B cell (primary cell): ENCODE measurements at regions of chr19 and their contacts with region 1.

Region 1: GRCh38 chr19:48993175-48994034 is at the starts of genes GYS1 and RUVBL2:
- DNase-seq: peak; percentile 100
- ATAC-seq: peak; percentile 91
- H3K4me3 ChIP-seq: peak within 1 kb of the TSS; percentile 61 to 94 (median 79)
- H3K4me3 Mint-ChIP-seq: peak within 1 kb of the TSS; percentile 94
- H3K27ac ChIP-seq: peak within 1 kb of the TSS; percentile 77 to 89
- H3K27ac Mint-ChIP-seq: peak within 1 kb of the TSS; percentile 92
- H3K4me1 ChIP-seq: peaks cover 15 to 27% of the 10 kb centered on the region in 2 donors
- H3K4me1 Mint-ChIP-seq: peaks cover 34% of the 10 kb centered on the region
- H3K27me3 ChIP-seq: no peaks in the 10 kb centered on the region
- H3K27me3 Mint-ChIP-seq: no peaks in the 10 kb centered on the region
- CTCF ChIP-seq: peak; percentile 99
- total RNA-seq, gene GYS1: 62.7 and 63.0 TPM in 2 replicates
- total RNA-seq, gene RUVBL2: 36.1 and 44.8 TPM in 2 replicates

Region 2: DNA sequence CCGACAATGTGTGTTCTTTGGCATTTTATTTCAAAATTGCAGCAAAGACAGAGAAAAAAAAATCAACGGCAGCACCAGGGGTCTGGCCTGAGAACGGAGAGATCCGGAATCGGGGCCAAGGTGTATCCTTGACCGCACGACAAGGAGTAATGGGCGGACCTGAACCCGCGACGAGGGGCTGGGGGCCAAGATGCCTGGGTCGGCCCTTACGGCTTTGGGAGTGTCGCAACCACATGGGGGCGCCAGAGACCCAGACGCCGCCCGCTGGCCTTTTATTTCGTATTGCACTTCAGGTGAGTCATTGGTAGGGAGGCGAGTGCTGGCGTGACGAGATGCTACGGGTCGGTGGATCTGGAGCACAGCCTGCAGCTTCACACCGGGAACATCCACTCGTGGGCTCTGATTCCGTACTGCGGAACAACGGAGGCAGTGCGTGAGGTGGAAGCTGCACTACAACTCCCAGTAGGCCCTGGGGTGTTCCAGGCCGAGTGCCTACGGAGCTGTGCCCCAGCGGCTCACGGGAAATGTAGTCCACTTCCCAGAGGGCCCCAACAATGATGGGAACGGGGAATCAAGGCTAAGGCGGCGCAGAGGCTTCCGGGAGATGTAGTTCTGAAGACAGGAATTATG is 198.2 kb before region 1 on chr19:
- CTCF ChIA-PET with region 1: interaction called, 9 read pairs
- POLR2A ChIA-PET with region 1: no interaction called
- intact Hi-C with region 1: loop called (anchors 1 kb)
- DNase-seq: peak; percentile 93
- ATAC-seq: peak; percentile 98
- H3K4me3 ChIP-seq: peak overlapping the region; percentile 42 to 68 (median 60)
- H3K4me3 Mint-ChIP-seq: peak overlapping the region; percentile 98
- H3K27ac ChIP-seq: peak overlapping the region; percentile 30 to 62
- H3K27ac Mint-ChIP-seq: peak overlapping the region; percentile 93
- H3K4me1 ChIP-seq: peaks cover 3 to 10% of the 10 kb centered on the region in 2 donors
- H3K4me1 Mint-ChIP-seq: peaks cover 11% of the 10 kb centered on the region
- H3K27me3 ChIP-seq: no peaks in the 10 kb centered on the region
- H3K27me3 Mint-ChIP-seq: no peaks in the 10 kb centered on the region
- CTCF ChIP-seq: peak; percentile 96

Region 3: GRCh38 chr19:48881741-48882657 is 111.4 kb before region 1 on chr19:
- CTCF ChIA-PET with region 1: no interaction called
- POLR2A ChIA-PET with region 1: no interaction called
- intact Hi-C with region 1: no loop called
- DNase-seq: peak; percentile 61
- ATAC-seq: peak; percentile 54
- H3K4me3 ChIP-seq: no peak overlapping the region
- H3K4me3 Mint-ChIP-seq: no peak overlapping the region
- H3K27ac ChIP-seq: no peak overlapping the region
- H3K27ac Mint-ChIP-seq: no peak overlapping the region
- H3K4me1 ChIP-seq: peaks cover 0 to 18% of the 10 kb centered on the region in 2 donors
- H3K4me1 Mint-ChIP-seq: peaks cover 17% of the 10 kb centered on the region
- H3K27me3 ChIP-seq: no peaks in the 10 kb centered on the region
- H3K27me3 Mint-ChIP-seq: no peaks in the 10 kb centered on the region
- CTCF ChIP-seq: no peak

Region 4: DNA sequence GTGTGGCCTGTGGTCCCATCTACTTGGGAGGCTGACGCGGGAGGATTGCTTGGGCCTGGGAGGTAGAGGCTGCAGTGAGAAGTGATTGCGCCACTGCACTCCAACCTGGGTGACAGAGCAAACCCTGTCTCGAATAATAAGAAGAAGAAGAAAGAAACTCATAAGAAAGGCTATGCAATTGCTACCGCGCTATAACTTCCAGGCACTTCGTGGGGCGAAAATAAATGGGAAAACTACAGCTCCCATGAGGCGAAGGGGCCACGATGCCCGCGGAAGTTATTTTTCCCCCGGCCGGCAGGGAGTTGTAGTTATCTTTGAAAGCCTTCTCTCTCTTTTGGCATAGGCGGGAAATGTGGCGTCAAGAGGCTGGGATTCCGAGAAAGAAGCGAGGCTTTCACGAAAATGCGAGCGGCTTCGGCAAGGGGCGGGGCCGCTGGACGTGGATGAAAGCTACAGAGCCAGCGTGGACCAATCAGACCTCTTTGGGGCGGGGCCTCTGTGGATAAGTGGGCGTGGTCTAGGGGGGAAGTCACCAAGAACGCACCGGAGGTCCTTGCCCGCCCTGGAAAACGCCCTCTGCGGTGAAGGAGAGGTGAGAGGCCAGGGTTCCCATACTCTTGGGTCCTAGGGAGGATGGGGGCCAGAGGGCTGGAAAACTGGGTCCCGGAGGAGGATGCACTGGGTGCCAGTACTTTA is 93.5 kb before region 1 on chr19 and contains the start of gene NUCB1:
- CTCF ChIA-PET with region 1: no interaction called
- POLR2A ChIA-PET with region 1: interaction called, 5 read pairs
- intact Hi-C with region 1: loop called (anchors 1 kb)
- DNase-seq: peak; percentile 96
- ATAC-seq: peak; percentile 99
- H3K4me3 ChIP-seq: peak within 1 kb of the TSS; percentile 62 to 95 (median 82)
- H3K4me3 Mint-ChIP-seq: peak within 1 kb of the TSS; percentile 96
- H3K27ac ChIP-seq: peak within 1 kb of the TSS; percentile 61 to 83
- H3K27ac Mint-ChIP-seq: peak within 1 kb of the TSS; percentile 91
- H3K4me1 ChIP-seq: peaks cover 18 to 35% of the 10 kb centered on the region in 2 donors
- H3K4me1 Mint-ChIP-seq: peaks cover 31% of the 10 kb centered on the region
- H3K27me3 ChIP-seq: peaks cover 0 to 25% (median 6%) of the 10 kb centered on the region in 4 experiments
- H3K27me3 Mint-ChIP-seq: peaks cover 11% of the 10 kb centered on the region
- CTCF ChIP-seq: no peak
- total RNA-seq, gene NUCB1: 134 and 136 TPM in 2 replicates

Region 5: DNA sequence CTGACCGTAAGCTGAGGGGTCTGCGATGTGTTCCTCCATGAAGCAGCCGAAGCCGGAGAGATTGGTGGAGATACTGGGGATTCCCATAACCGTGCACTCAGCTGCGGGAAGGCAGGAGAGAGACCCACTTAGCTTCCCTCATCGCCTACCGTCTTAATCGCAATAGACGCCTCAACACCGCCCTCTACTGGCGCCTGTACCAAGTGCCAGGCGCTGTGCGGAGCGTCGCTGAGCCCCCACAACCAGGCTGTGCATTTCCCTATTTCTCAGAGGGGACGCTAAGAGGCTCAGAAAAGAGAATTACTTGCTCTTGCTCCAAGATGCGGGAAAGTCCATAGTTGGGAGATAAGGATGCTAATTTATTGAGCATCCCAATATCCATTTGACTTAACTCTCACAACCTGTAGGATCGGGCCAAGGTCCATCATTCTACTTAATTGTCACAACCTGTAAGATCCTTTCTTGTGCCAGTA is 22.4 kb before region 1 on chr19:
- CTCF ChIA-PET with region 1: interaction called, 17 read pairs
- POLR2A ChIA-PET with region 1: interaction called, 17 read pairs
- intact Hi-C with region 1: no loop called
- DNase-seq: peak; percentile 91
- ATAC-seq: peak; percentile 89
- H3K4me3 ChIP-seq: no peak overlapping the region
- H3K4me3 Mint-ChIP-seq: no peak overlapping the region
- H3K27ac ChIP-seq: no peak overlapping the region
- H3K27ac Mint-ChIP-seq: peak overlapping the region; percentile 63
- H3K4me1 ChIP-seq: peaks cover 12 to 29% of the 10 kb centered on the region in 2 donors
- H3K4me1 Mint-ChIP-seq: peaks cover 34% of the 10 kb centered on the region
- H3K27me3 ChIP-seq: no peaks in the 10 kb centered on the region
- H3K27me3 Mint-ChIP-seq: no peaks in the 10 kb centered on the region
- CTCF ChIP-seq: peak; percentile 93

Region 6: GRCh38 chr19:49017666-49018351 is 24.4 kb after region 1 on chr19:
- CTCF ChIA-PET with region 1: interaction called, 10 read pairs
- POLR2A ChIA-PET with region 1: interaction called, 10 read pairs
- intact Hi-C with region 1: loop called (anchors 2 kb)
- DNase-seq: peak; percentile 82
- ATAC-seq: peak; percentile 80
- H3K4me3 ChIP-seq: peak overlapping the region in 4 of 5 experiments; percentile 52 to 73 (median 60)
- H3K4me3 Mint-ChIP-seq: peak overlapping the region; percentile 89
- H3K27ac ChIP-seq: peak overlapping the region in 1 of 2 donors; percentile 30
- H3K27ac Mint-ChIP-seq: peak overlapping the region; percentile 67
- H3K4me1 ChIP-seq: peaks cover 25 to 40% of the 10 kb centered on the region in 2 donors
- H3K4me1 Mint-ChIP-seq: peaks cover 34% of the 10 kb centered on the region
- H3K27me3 ChIP-seq: peaks cover 0 to 9% (median 2%) of the 10 kb centered on the region in 4 experiments
- H3K27me3 Mint-ChIP-seq: no peaks in the 10 kb centered on the region
- CTCF ChIP-seq: peak; percentile 78

Region 7: GRCh38 chr19:49118565-49119410 is 125.4 kb after region 1 on chr19 and contains the start of gene C19orf73:
- CTCF ChIA-PET with region 1: interaction called, 6 read pairs
- POLR2A ChIA-PET with region 1: no interaction called
- intact Hi-C with region 1: loop called (anchors 10 kb)
- DNase-seq: peak; percentile 99
- ATAC-seq: peak; percentile 81
- H3K4me3 ChIP-seq: peak within 1 kb of the TSS; percentile 39 to 88 (median 62)
- H3K4me3 Mint-ChIP-seq: peak within 1 kb of the TSS; percentile 90
- H3K27ac ChIP-seq: peak within 1 kb of the TSS; percentile 93 to 95
- H3K27ac Mint-ChIP-seq: peak within 1 kb of the TSS; percentile 93
- H3K4me1 ChIP-seq: peaks cover 22 to 33% of the 10 kb centered on the region in 2 donors
- H3K4me1 Mint-ChIP-seq: peaks cover 41% of the 10 kb centered on the region
- H3K27me3 ChIP-seq: peaks cover 0 to 11% (median 2%) of the 10 kb centered on the region in 4 experiments
- H3K27me3 Mint-ChIP-seq: peaks cover 6% of the 10 kb centered on the region
- CTCF ChIP-seq: peak; percentile 53
- total RNA-seq, gene C19orf73: 3.9 and 5.3 TPM in 2 replicates